B cell (primary cell): ENCODE measurements at regions of chr7 and their contacts with region 1.

Region 1: GRCh38 chr7:123494193-123494796 is 40.1 kb downstream of the IQUB start:
- DNase-seq: peak; percentile 52
- ATAC-seq: no peak
- H3K4me3 ChIP-seq: no peak overlapping the region
- H3K4me3 Mint-ChIP-seq: no peak overlapping the region
- H3K27ac ChIP-seq: no peak overlapping the region
- H3K27ac Mint-ChIP-seq: no peak overlapping the region
- H3K4me1 ChIP-seq: no peaks in the 10 kb centered on the region
- H3K4me1 Mint-ChIP-seq: no peaks in the 10 kb centered on the region
- H3K27me3 ChIP-seq: peaks cover 0 to 5% (median 0%) of the 10 kb centered on the region in 4 experiments
- H3K27me3 Mint-ChIP-seq: peaks cover 12% of the 10 kb centered on the region
- CTCF ChIP-seq: peak; percentile 92

Region 2: DNA sequence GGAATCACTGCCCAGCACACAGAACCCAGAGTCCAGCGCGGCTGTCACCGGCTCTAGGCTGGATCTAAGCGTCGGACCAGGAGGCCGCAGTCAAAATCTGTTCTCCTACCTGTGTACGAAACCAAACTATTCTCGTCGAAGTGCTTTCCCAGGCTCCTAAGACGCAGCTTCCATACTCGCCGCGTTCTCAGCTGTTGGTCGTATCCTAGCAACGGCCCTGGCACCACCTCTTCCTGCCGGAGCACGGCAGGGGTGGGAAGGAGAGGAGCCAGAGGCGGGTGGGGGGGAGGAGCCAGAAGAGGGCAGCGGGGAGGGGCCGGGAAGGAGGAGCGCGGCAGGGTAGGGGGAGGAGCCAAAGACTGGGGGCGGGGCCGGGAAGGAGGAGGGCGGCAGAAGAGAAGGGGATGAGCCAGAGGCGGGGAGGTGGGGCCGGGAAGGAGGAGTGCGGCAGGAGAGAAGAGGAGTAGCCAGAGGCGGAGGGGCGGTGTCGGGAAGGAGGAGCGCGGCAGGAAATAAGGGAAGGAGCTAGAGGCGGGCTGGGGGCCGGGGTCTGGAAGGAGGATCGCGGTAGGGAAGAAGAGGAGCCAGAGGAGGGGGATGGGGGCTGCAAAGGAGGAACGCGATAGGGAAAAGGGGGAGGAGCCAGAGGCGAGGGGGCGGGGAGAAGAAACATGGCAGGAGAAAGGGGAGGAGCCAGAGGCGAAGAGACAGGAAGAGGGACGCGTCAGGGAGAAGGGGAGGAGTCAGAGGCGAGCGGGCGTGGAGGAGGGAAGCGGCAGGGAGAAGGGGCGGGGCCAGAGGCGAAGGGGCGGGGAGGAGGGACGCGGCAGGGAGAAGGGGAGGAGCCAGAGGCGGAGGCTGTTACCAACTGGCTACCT is 40.3 kb after region 1 on chr7 and contains the start of gene IQUB:
- CTCF ChIA-PET with region 1: interaction called, 19 read pairs
- POLR2A ChIA-PET with region 1: no interaction called
- intact Hi-C with region 1: loop called (anchors 1 kb)
- DNase-seq: peak; percentile 92
- ATAC-seq: peak; percentile 82
- H3K4me3 ChIP-seq: peak within 1 kb of the TSS; percentile 67 to 81 (median 71)
- H3K4me3 Mint-ChIP-seq: peak within 1 kb of the TSS; percentile 93
- H3K27ac ChIP-seq: peak within 1 kb of the TSS; percentile 41 to 69
- H3K27ac Mint-ChIP-seq: peak within 1 kb of the TSS; percentile 5
- H3K4me1 ChIP-seq: peaks cover 13 to 19% of the 10 kb centered on the region in 2 donors
- H3K4me1 Mint-ChIP-seq: peaks cover 20% of the 10 kb centered on the region
- H3K27me3 ChIP-seq: peaks cover 0 to 8% (median 3%) of the 10 kb centered on the region in 4 experiments
- H3K27me3 Mint-ChIP-seq: peaks cover 8% of the 10 kb centered on the region
- CTCF ChIP-seq: no peak
- total RNA-seq, gene IQUB: 0.12 and 0.27 TPM in 2 replicates

Region 3: GRCh38 chr7:123705211-123705901 is 211.1 kb after region 1 on chr7:
- CTCF ChIA-PET with region 1: interaction called, 14 read pairs
- POLR2A ChIA-PET with region 1: no interaction called
- intact Hi-C with region 1: loop called (anchors 1 kb)
- DNase-seq: no peak
- ATAC-seq: no peak
- H3K4me3 ChIP-seq: no peak overlapping the region
- H3K4me3 Mint-ChIP-seq: no peak overlapping the region
- H3K27ac ChIP-seq: no peak overlapping the region
- H3K27ac Mint-ChIP-seq: no peak overlapping the region
- H3K4me1 ChIP-seq: no peaks in the 10 kb centered on the region
- H3K4me1 Mint-ChIP-seq: no peaks in the 10 kb centered on the region
- H3K27me3 ChIP-seq: no peaks in the 10 kb centered on the region
- H3K27me3 Mint-ChIP-seq: no peaks in the 10 kb centered on the region
- CTCF ChIP-seq: no peak

Region 4: GRCh38 chr7:123871998-123872867 is 377.9 kb after region 1 on chr7:
- CTCF ChIA-PET with region 1: interaction called, 15 read pairs
- POLR2A ChIA-PET with region 1: no interaction called
- intact Hi-C with region 1: loop called (anchors 2 kb)
- DNase-seq: peak; percentile 20
- ATAC-seq: no peak
- H3K4me3 ChIP-seq: no peak overlapping the region
- H3K4me3 Mint-ChIP-seq: no peak overlapping the region
- H3K27ac ChIP-seq: no peak overlapping the region
- H3K27ac Mint-ChIP-seq: no peak overlapping the region
- H3K4me1 ChIP-seq: no peaks in the 10 kb centered on the region
- H3K4me1 Mint-ChIP-seq: no peaks in the 10 kb centered on the region
- H3K27me3 ChIP-seq: no peaks in the 10 kb centered on the region
- H3K27me3 Mint-ChIP-seq: no peaks in the 10 kb centered on the region
- CTCF ChIP-seq: peak; percentile 35